Activated T-helper 1 cell treated with anti-CD3 and anti-CD28 coated beads, Interleukin-12 subunit alpha, Interleukin-12 subunit beta, Interleukin-2, Interleukin-4 antibody, amounts not matched to agents 30 ng/mL and 10 ng/mL and 1 ng/mL, durations not matched to agents 14 hours and 24 hours and 36 hours (primary cell): ENCODE measurements at regions of chr1 and their contacts with region 1.

Region 1: DNA sequence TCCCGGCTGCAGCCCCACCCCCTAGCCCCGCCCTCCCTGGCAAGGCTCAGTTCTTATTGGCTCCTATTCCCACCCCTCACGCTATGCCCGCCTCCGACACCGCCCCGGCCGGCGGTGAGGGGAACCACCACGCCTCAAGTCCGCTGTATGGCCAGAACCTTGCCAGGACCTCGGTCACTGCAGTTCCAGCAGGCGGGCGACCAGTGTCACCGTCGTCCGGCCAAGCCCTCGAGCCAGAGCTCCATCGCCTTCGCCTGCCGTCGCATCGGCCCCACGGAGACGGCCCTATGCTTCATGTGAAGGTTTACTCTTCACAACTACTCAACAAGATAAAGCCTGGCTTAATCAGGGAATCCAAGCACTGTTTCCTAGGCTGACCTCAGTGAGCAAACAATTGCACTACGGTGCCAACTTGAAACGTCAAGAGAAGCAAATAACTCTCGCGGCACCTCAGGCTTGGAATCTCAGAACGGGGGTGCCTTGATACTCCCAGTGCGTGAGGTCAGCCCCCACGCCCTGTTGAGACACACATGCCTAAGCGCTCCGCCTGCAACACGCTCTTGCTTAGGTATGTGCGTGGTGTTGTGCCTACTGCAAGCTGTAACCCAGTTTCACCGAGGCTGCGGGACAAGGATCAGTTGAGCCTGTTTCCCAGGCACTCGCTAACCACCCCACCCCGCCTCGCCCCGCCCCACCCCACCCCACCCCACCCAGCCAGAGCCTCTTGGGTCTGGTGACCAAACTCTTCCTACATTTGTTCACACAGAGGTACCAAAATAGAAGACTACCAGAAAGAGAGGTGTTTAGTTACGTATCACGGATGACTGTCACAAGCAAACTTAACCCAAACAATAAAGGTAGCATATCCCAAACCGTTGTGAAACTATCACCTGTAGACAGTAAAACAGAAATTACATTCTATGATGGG is 498 bp upstream of the DENND2C start:
- DNase-seq: peak; percentile 76
- H3K4me3 Mint-ChIP-seq: peak overlapping the region; percentile 89
- H3K27ac Mint-ChIP-seq: peak overlapping the region; percentile 20
- H3K4me1 Mint-ChIP-seq: peaks cover 8% of the 10 kb centered on the region
- H3K27me3 Mint-ChIP-seq: peaks cover 48% of the 10 kb centered on the region

Region 2: GRCh38 chr1:114581335-114582287 is 88.7 kb before region 1 on chr1 and contains the start of gene BCAS2:
- intact Hi-C with region 1: loop called (anchors 1 kb)
- DNase-seq: peak; percentile 94
- H3K4me3 Mint-ChIP-seq: peak within 1 kb of the TSS; percentile 91
- H3K27ac Mint-ChIP-seq: peak within 1 kb of the TSS; percentile 92
- H3K4me1 Mint-ChIP-seq: peaks cover 34% of the 10 kb centered on the region
- H3K27me3 Mint-ChIP-seq: peaks cover 5% of the 10 kb centered on the region
- total RNA-seq, gene BCAS2: 61.9 and 63.0 TPM in 2 replicates

Region 3: GRCh38 chr1:115506926-115507589 is 836.7 kb after region 1 on chr1:
- intact Hi-C with region 1: no loop called
- DNase-seq: no peak
- H3K4me3 Mint-ChIP-seq: no peak overlapping the region
- H3K27ac Mint-ChIP-seq: no peak overlapping the region
- H3K4me1 Mint-ChIP-seq: no peaks in the 10 kb centered on the region
- H3K27me3 Mint-ChIP-seq: no peaks in the 10 kb centered on the region